ENCODE measurements at regions of chr16 and their contacts with region 1.

Region 1: DNA sequence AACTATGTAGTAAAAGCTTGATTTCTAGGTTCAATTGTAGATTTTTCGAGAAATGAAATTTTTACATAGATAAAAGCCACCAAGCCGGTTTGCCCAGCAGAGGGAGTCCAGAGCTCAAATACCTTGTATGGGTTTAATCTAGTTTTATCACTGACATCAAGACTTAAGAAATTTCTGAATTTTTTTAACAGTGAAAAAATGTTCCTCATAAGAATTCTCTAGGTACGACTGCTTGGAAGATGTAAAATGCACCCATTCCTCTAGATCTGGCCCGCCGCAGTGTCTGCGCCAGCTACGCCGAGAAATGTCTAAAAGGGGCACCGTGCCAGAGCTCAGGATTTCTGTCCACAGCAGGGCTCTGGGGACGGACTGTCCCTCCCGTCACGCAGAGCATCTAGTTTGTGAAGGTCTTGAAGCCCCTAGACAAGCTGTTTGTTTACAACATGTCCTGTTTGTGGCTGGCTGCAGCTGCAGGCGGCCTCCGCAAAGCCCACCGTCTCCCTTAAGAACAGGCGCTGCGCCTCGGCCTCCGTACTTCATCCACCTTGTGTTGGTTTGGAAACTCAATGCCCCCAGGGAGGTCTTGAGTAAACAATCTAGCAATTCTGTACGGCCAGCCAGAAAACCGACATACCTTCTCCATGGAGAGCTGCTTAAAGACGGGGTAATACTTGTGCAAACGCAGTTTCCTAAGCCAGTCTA is 24.8 kb downstream of the MAP1LC3B start:
- DNase-seq: peak; percentile 26 to 40
- H3K4me3 ChIP-seq: no peak overlapping the region
- H3K27ac ChIP-seq: no peak overlapping the region
- H3K4me1 ChIP-seq: no peaks in the 10 kb centered on the region
- H3K27me3 ChIP-seq: no peaks in the 10 kb centered on the region
- CTCF ChIP-seq: peak; percentile 78

Region 2: DNA sequence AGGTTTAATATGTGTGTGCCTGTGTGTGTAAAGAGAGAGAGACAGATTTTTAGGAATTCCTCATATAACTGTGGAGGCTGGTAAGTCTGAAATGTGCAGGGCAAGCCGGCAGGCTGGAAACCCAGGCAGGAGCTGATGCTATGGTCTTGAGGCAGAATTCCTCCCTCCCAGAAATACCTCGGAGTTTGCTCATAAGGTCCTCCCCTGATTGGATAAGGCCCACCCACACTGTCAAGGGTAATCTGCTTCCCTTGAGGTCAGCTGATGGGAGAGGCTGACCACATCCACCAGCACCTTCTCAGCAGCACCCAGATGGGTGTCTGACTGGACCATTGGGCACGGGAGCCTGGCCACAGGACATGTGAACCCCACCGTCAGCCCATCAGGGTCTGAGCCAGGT is 142.2 kb before region 1 on chr16:
- CTCF ChIA-PET with region 1: no interaction called
- POLR2A ChIA-PET with region 1: no interaction called
- intact Hi-C with region 1: no loop called
- DNase-seq: no peak
- H3K4me3 ChIP-seq: no peak overlapping the region
- H3K27ac ChIP-seq: no peak overlapping the region
- H3K4me1 ChIP-seq: no peaks in the 10 kb centered on the region
- H3K27me3 ChIP-seq: no peaks in the 10 kb centered on the region
- CTCF ChIP-seq: no peak

Region 3: GRCh38 chr16:87571136-87571867 is 154.3 kb after region 1 on chr16:
- CTCF ChIA-PET with region 1: interaction called, 7 read pairs
- POLR2A ChIA-PET with region 1: no interaction called
- intact Hi-C with region 1: loop called (anchors 5 kb)
- DNase-seq: peak; percentile 36 to 58
- H3K4me3 ChIP-seq: no peak overlapping the region
- H3K27ac ChIP-seq: no peak overlapping the region
- H3K4me1 ChIP-seq: no peaks in the 10 kb centered on the region
- H3K27me3 ChIP-seq: peaks cover 72% of the 10 kb centered on the region
- CTCF ChIP-seq: peak; percentile 63

Measured in PC-9 (cell line).